ENCODE measurements at regions of chr7 and their contacts with region 1.

Region 1: GRCh38 chr7:108038986-108039385 is 36.0 kb upstream of the LAMB1 start:
- DNase-seq: no peak
- ATAC-seq: no peak

Region 2: GRCh38 chr7:108057951-108058421 is 19.0 kb after region 1 on chr7:
- intact Hi-C with region 1: loop called (anchors 1 kb)
- DNase-seq: no peak
- ATAC-seq: no peak

Region 3: DNA sequence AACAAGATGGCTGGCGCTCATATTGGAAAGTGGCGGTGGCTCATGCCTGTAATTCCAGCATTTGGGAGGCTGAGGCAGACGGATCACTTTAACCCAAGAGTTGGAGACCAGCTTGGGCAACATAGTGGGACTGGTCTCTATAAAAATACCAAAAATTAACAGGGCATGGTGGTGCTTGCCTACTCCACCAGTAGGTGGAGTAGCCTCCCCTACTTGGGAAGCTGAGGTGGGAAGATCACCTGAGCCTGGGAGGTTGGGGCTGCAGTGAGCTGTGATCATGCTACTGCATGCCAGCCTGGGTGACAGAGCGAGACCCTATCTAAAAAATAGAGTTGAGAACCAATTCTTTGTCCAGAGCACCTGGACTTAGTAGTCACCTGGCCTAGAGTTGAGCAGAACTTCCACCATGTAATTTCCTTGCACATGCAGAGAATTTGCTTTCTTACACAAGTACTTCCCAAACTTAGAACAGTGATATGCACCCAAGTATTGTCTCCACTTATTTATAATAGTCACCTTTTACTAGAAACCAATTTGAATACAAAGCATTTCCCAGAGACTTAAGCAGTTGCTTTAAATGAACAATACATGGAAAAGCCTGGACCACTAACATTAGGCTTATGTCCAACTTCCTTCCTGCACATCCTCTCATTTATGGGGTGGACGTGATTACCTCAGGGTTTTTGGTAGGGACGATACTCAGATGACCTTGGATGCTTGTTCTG is 75.3 kb after region 1 on chr7:
- intact Hi-C with region 1: no loop called
- DNase-seq: no peak
- ATAC-seq: no peak